Endothelial cell of umbilical vein (primary cell): ENCODE measurements at regions of chr1 and their contacts with region 1.

Region 1: GRCh38 chr1:10528066-10529014 is 53.6 kb downstream of the PEX14 start:
- DNase-seq: peak; percentile 75
- H3K4me3 ChIP-seq: peak overlapping the region in 1 of 3 experiments; percentile 28
- H3K27ac ChIP-seq: peak overlapping the region; percentile 87
- H3K4me1 ChIP-seq: peaks cover 30% of the 10 kb centered on the region
- H3K27me3 ChIP-seq: no peaks in the 10 kb centered on the region
- CTCF ChIP-seq: no peak
- POLR2A ChIP-seq: no peak

Region 2: DNA sequence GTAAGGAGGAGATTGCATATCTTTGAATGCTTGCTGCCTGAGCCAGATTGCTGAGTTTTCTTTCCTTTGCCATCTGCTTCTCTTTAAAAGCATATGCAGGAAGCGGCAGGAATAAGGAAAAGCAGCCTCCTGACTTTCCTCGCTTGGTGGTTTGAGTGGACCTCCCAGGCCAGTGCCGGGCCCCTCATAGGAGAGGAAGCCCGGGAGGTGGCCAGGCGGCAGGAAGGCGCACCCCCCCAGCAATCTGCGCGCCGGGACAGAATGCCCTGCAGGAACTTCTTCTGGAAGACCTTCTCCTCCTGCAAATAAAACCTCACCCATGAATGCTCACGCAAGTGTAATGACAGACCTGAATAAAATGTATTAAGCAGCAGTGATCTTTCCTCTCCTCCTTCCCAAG is 77.1 kb before region 1 on chr1:
- CTCF ChIA-PET with region 1: no interaction called
- POLR2A ChIA-PET with region 1: no interaction called
- dilution Hi-C with region 1: no loop called
- intact Hi-C with region 1: no loop called
- DNase-seq: peak; percentile 42
- H3K4me3 ChIP-seq: peak overlapping the region in 2 of 3 experiments; percentile 18 to 27
- H3K27ac ChIP-seq: no peak overlapping the region
- H3K4me1 ChIP-seq: peaks cover 9% of the 10 kb centered on the region
- H3K27me3 ChIP-seq: no peaks in the 10 kb centered on the region
- CTCF ChIP-seq: no peak
- POLR2A ChIP-seq: no peak

Region 3: DNA sequence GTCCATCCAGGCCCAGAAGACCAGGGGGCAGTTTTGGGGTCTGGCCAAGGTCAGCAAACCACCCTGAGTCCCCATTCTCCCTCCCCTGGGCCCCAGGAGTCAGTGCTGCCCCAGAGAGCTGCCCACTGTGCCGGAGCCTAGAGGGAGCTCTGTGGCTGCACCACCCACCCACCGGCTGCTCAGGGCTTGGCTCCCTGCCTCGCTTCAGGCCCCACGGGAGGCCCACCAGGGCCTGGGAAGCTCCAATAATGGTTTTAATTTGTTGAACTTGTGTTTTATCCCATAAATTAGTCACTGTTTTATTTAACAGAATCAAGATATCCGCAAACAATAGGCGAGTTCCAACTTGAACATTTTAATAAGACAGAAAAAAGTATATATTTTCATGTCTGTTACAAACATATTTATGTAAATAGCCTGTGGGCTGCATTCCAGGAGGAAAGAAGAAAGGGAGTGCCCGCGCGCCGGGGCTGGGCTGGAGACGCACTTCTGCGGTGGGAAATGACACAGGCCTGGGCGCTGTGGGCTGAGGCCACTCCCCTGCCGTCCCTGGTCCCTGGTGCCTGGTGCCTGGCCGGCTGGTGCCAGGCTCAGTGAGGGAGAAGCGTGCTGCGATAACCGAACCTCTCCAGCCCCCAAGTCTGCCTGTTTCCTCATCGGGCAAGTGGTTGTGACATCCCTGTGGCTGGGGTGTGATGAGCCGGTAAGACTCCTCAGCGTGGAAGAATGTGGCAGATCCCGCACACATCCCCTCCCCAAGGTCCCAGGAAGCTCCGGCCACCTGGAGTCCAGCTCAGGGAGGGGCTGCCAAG is 107.0 kb after region 1 on chr1:
- CTCF ChIA-PET with region 1: interaction called, 6 read pairs
- POLR2A ChIA-PET with region 1: no interaction called
- dilution Hi-C with region 1: no loop called
- intact Hi-C with region 1: loop called (anchors 2 kb)
- DNase-seq: no peak
- H3K4me3 ChIP-seq: no peak overlapping the region
- H3K27ac ChIP-seq: no peak overlapping the region
- H3K4me1 ChIP-seq: peaks cover 7% of the 10 kb centered on the region
- H3K27me3 ChIP-seq: peaks cover 0 to 9% of the 10 kb centered on the region in 2 experiments
- CTCF ChIP-seq: no peak
- POLR2A ChIP-seq: no peak

Region 4: GRCh38 chr1:10694633-10695627 is 166.6 kb after region 1 on chr1:
- CTCF ChIA-PET with region 1: no interaction called
- POLR2A ChIA-PET with region 1: no interaction called
- dilution Hi-C with region 1: no loop called
- intact Hi-C with region 1: loop called (anchors 5 kb)
- DNase-seq: peak; percentile 77
- H3K4me3 ChIP-seq: peak overlapping the region; percentile 28 to 51 (median 31)
- H3K27ac ChIP-seq: no peak overlapping the region
- H3K4me1 ChIP-seq: no peaks in the 10 kb centered on the region
- H3K27me3 ChIP-seq: peaks cover 2 to 3% of the 10 kb centered on the region in 2 experiments
- CTCF ChIP-seq: no peak
- POLR2A ChIP-seq: no peak

Region 5: DNA sequence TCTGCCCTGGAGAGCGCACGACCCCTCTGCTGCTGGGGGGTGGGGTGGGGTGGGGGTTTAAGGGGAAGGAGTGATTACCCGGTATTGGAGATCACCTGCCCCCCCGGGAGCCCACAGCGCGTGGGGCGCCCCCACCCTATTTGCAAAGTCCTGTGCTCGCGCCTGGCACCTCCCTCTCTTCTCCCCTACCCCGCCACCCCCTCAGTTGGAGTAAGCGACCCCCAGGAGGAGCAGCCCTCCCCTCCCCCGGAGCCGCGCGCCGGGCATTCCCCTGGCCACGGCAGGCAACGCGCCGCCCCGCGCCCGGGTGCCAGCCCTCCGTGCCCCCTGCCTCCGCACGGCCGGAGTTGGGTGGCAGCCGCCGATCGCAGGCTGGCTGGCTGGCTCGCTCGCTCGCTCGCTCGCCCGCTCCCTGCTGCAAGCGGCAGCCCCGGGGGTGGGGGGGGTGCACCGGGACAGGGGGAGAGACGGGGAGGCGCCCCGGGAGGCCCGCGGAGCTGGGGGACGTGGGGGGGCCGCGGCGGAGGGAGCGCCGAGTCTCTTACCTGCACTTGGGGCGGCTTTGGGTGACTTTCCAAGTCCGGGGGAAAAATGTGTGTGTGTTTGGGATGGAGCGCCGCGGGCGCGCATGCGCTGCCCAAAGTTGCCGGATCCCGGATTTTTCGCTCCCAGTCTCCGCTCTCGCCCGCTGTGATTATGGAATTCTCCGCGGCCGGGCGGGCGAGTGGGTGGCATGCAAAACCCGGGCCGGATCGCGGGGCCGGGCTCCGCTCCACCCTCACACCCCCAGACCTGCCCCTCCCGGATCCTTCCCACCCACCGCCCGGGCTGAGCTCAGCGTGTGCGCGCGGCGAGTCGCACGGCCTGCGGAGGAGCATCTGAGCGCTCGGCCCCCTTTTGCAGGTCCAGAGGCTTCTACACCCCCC is 267.9 kb after region 1 on chr1 and contains the start of gene CASZ1:
- CTCF ChIA-PET with region 1: interaction called, 3 read pairs
- POLR2A ChIA-PET with region 1: no interaction called
- dilution Hi-C with region 1: no loop called
- intact Hi-C with region 1: loop called (anchors 2 kb)
- DNase-seq: peak; percentile 83
- H3K4me3 ChIP-seq: peak within 1 kb of the TSS; percentile 48 to 68 (median 56)
- H3K27ac ChIP-seq: no peak within 1 kb of the TSS
- H3K4me1 ChIP-seq: peaks cover 14% of the 10 kb centered on the region
- H3K27me3 ChIP-seq: peaks cover 39 to 58% of the 10 kb centered on the region in 2 experiments
- CTCF ChIP-seq: no peak
- POLR2A ChIP-seq: no peak
- total RNA-seq, gene CASZ1: 5.1 and 5.2 TPM in 2 replicates

Region 6: GRCh38 chr1:10960411-10961299 is 432.3 kb after region 1 on chr1:
- CTCF ChIA-PET with region 1: no interaction called
- POLR2A ChIA-PET with region 1: no interaction called
- dilution Hi-C with region 1: no loop called
- intact Hi-C with region 1: loop called (anchors 5 kb)
- DNase-seq: peak; percentile 58
- H3K4me3 ChIP-seq: no peak overlapping the region
- H3K27ac ChIP-seq: no peak overlapping the region
- H3K4me1 ChIP-seq: no peaks in the 10 kb centered on the region
- H3K27me3 ChIP-seq: no peaks in the 10 kb centered on the region
- CTCF ChIP-seq: peak; percentile 81 to 97
- POLR2A ChIP-seq: no peak